ENCODE measurements at regions of chr2 and their contacts with region 1.

Region 1: DNA sequence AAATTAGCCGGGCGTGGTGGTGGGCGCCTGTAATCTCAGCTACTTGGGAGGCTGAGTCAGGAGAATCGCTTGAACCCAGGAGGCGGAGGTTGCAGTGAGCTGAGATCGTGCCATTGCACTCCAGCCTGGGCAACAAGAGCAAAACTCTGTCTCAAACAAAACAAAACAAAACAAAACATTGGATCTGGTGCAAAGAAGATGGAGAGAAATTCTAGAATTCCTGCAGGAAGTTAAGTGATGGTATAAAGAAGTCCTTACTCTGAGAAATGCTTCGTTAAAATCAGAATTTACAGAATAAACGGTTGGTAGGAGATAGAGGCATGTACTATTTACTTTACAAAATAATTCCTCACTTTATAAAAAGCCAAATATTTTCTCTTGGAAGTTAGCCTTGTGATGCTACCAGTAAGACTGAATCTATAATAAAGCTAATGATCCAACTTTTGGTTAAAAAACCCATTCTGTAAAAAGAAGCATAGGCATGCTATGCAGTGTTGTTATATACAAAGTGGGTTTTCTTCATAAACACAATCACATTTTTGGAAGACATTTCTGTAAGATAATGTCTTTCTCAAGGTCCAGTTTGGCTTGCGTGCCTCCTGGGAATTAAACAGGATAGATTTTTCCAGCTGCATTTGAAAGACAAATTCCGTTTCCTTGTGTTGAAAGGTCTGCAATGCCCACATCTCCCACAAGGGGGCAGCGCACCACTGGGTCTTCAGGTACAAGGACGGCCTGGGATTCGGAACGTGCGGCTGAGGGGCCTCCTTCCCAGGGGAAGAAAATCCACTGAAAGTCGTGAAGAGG is 35.6 kb upstream of the PNO1 start:
- DNase-seq: peak; percentile 87
- ATAC-seq: no peak
- H3K4me3 Mint-ChIP-seq: no peak overlapping the region
- H3K27ac Mint-ChIP-seq: no peak overlapping the region
- H3K4me1 Mint-ChIP-seq: peaks cover 2% of the 10 kb centered on the region
- H3K27me3 Mint-ChIP-seq: no peaks in the 10 kb centered on the region

Region 2: GRCh38 chr2:68135448-68136320 is 13.6 kb after region 1 on chr2:
- CTCF ChIA-PET with region 1: interaction called, 12 read pairs
- POLR2A ChIA-PET with region 1: no interaction called
- intact Hi-C with region 1: no loop called
- DNase-seq: no peak
- ATAC-seq: no peak
- H3K4me3 Mint-ChIP-seq: no peak overlapping the region
- H3K27ac Mint-ChIP-seq: no peak overlapping the region
- H3K4me1 Mint-ChIP-seq: no peaks in the 10 kb centered on the region
- H3K27me3 Mint-ChIP-seq: no peaks in the 10 kb centered on the region

Region 3: DNA sequence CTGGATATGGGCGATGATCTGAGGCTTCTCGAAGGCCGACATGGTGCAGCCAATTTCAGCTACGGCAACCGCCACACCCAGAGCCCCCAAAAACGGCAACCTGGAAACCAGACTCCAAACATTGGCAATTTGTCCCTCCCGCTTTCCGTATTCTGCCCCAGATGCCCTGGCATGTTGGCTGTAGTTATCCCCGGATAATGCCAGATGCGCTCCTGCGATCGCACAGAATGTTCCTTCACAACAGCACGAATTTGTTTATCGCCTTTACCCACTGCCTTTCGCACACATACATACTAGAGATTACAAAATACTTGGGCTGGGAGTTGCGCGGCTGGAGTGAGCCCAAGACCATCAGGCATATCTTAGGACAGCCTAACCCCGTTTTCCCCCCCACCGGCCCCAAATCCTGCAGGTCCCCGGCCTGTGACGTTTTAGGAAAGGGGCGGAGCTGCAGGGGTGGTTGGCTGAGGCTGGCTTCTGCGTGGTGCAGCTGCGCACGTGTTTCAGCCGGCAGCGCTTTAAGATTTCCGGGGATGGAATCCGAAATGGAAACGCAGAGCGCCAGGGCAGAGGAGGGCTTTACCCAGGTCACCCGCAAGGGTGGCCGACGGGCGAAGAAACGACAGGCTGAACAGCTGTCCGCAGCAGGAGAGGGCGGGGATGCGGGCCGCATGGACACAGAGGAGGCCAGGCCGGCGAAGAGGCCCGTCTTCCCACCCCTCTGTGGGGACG is 35.5 kb after region 1 on chr2 and contains the start of gene PNO1:
- CTCF ChIA-PET with region 1: interaction called, 10 read pairs
- POLR2A ChIA-PET with region 1: no interaction called
- intact Hi-C with region 1: no loop called
- DNase-seq: peak; percentile 98
- ATAC-seq: peak; percentile 93
- H3K4me3 Mint-ChIP-seq: peak within 1 kb of the TSS; percentile 97
- H3K27ac Mint-ChIP-seq: peak within 1 kb of the TSS; percentile 100
- H3K4me1 Mint-ChIP-seq: peaks cover 51% of the 10 kb centered on the region
- H3K27me3 Mint-ChIP-seq: no peaks in the 10 kb centered on the region
- total RNA-seq, gene PNO1: 15.7 to 20.5 TPM

Region 4: DNA sequence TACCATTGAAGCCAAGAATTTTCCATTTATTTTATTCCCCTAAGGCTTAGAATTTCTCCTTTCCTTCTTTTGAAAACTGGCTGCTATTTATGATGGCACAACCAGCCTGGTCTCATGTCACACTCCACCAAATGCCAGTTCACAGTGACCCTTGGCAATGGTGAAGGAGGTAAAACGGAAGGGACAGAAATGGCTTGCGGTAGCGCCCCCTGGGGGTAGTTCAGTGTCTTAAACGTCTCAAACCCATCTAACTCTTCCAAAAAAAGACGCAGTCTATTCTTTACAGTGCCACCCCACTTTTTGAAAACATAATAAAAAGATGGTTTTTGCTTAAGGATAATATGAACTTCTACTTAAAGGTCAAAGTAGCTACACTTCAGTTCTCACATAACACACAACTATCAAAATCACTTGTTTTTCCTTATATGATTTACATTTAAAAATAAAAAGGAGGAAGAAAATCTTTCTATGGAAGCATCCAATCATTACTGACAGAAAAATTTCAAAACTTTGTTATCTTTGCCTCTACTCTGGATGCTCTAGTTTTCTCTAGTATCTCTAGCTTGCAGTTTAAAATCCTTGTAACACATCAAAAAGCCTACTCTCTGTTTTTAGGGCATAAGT is 63.6 kb after region 1 on chr2:
- CTCF ChIA-PET with region 1: interaction called, 12 read pairs
- POLR2A ChIA-PET with region 1: no interaction called
- intact Hi-C with region 1: loop called (anchors 1 to 2 kb)
- DNase-seq: peak; percentile 81
- ATAC-seq: peak; percentile 51
- H3K4me3 Mint-ChIP-seq: no peak overlapping the region
- H3K27ac Mint-ChIP-seq: no peak overlapping the region
- H3K4me1 Mint-ChIP-seq: peaks cover 20% of the 10 kb centered on the region
- H3K27me3 Mint-ChIP-seq: no peaks in the 10 kb centered on the region

Region 5: GRCh38 chr2:68244456-68244855 is 122.4 kb after region 1 on chr2:
- CTCF ChIA-PET with region 1: interaction called, 13 read pairs
- POLR2A ChIA-PET with region 1: interaction called, 3 read pairs
- intact Hi-C with region 1: no loop called
- DNase-seq: no peak
- ATAC-seq: no peak
- H3K4me3 Mint-ChIP-seq: no peak overlapping the region
- H3K27ac Mint-ChIP-seq: no peak overlapping the region
- H3K4me1 Mint-ChIP-seq: peaks cover 29% of the 10 kb centered on the region
- H3K27me3 Mint-ChIP-seq: no peaks in the 10 kb centered on the region

Region 6: GRCh38 chr2:68282811-68283418 is 160.8 kb after region 1 on chr2:
- CTCF ChIA-PET with region 1: interaction called, 72 read pairs
- POLR2A ChIA-PET with region 1: no interaction called
- intact Hi-C with region 1: loop called (anchors 1 kb)
- DNase-seq: peak; percentile 30
- ATAC-seq: peak; percentile 64
- H3K4me3 Mint-ChIP-seq: no peak overlapping the region
- H3K27ac Mint-ChIP-seq: no peak overlapping the region
- H3K4me1 Mint-ChIP-seq: peaks cover 5% of the 10 kb centered on the region
- H3K27me3 Mint-ChIP-seq: peaks cover 7% of the 10 kb centered on the region

Region 7: DNA sequence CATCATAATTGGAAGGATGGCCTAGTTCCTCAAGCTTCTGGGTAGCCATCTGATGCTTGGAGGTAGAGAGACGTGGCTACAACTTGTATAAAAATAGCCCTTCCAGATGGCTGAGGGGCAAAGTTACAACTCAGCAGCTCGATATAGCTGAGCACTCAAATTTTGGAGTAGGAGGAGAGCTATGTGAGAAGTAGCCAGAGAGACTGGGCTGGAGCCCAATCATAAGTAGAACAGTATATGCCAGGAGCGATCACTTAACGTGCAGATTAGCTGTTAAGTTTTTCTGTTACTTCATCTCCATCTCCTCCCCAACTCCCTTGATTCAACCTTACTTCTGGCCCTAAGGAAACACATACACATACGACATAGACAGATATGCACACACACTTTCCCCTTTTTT is 168.8 kb after region 1 on chr2:
- CTCF ChIA-PET with region 1: interaction called, 72 read pairs
- POLR2A ChIA-PET with region 1: interaction called, 3 read pairs
- intact Hi-C with region 1: loop called (anchors 1 kb)
- DNase-seq: no peak
- ATAC-seq: no peak
- H3K4me3 Mint-ChIP-seq: no peak overlapping the region
- H3K27ac Mint-ChIP-seq: no peak overlapping the region
- H3K4me1 Mint-ChIP-seq: no peaks in the 10 kb centered on the region
- H3K27me3 Mint-ChIP-seq: peaks cover 8% of the 10 kb centered on the region